Cardiac septum (tissue), 1 donor: ENCODE measurements at regions of chr17 and their contacts with region 1.

Region 1: GRCh38 chr17:77834170-77835115 is 124.1 kb upstream of the TNRC6C start:
- DNase-seq: peak; percentile 82

Region 2: DNA sequence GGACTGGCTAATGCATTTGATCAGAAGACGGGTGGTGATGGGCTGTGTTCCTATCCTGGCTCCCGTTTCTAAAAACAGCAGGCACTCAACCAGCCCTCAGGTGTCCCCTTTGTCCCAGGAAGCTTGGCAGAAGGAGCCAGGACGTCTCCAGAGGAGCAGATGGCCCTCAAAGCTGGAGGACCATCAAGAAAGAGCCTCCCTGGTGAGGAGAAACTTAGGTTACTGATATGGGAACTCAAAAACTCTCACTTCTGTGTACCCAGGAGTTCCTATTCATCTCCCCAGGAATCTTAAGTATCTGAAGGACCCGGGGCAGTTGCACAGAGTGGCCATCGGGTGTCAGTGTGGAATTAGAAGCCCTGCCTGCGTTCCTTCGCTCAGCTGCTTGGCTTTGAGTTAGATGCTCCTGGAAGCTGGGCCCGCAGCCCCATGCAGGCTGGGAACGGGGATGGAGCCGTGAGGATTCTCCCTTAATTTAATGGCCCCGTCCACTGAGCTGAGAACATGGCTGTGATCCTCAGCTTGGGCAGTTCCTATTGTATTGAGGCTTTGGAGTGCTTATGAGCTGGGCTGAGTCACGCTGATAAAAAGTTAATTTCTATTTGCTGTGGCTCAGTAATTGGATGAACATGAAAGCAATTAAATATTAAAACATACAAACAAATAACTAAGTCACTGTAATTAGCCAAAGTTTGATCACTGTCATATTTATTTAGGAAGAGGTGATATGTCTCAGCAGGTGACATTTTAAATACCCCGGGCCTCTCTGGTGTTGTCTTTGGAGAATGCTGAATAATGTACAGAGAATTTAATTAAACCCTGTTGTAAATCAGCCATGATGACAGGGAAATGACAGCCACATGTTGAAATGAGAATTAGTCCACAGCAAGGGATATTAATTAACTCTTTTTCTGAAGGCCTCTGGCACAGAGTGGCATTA is 291.6 kb before region 1 on chr17:
- intact Hi-C with region 1: loop called (anchors 10 kb)
- DNase-seq: peak; percentile 84

Region 3: GRCh38 chr17:77609553-77610517 is 224.6 kb before region 1 on chr17:
- intact Hi-C with region 1: loop called (anchors 10 kb)
- DNase-seq: no peak

Region 4: GRCh38 chr17:77723071-77723908 is 111.2 kb before region 1 on chr17:
- intact Hi-C with region 1: no loop called
- DNase-seq: no peak

Region 5: GRCh38 chr17:77734341-77735080 is 99.9 kb before region 1 on chr17:
- intact Hi-C with region 1: loop called (anchors 5 kb)
- DNase-seq: peak; percentile 94

Region 6: DNA sequence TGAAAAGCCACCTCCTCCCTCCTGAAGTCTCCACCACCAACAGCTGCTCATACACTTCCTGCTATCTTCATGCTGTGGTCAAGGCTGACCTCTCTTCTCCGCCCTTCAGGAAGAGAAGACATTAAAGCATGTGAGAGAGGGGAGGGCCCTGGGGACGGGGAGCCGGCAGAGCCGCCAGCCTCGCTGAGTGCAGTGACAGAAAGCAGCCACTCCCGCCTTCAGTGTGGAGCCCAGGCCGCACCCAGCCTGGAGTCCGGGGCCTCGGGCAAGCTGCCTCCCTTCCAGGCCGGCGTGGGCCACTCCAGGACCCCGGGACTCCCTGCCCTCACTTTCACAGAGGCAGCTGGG is 29.3 kb after region 1 on chr17:
- intact Hi-C with region 1: loop called (anchors 2 kb)
- DNase-seq: no peak

Region 7: GRCh38 chr17:77881545-77881944 is 47.1 kb after region 1 on chr17:
- intact Hi-C with region 1: loop called (anchors 1 kb)
- DNase-seq: peak; percentile 96

Region 8: GRCh38 chr17:78013683-78014467 is 179.4 kb after region 1 on chr17:
- intact Hi-C with region 1: loop called (anchors 10 kb)
- DNase-seq: no peak